Left colon (tissue), 2 donors: ENCODE measurements at regions of chr5 and their contacts with region 1.

Region 1: GRCh38 chr5:5409151-5409810 is 13.2 kb upstream of the ICE1 start:
- DNase-seq: peak in 1 of 2 donors; percentile 13
- ATAC-seq: no peak

Region 2: GRCh38 chr5:5128766-5129165 is 280.5 kb before region 1 on chr5:
- intact Hi-C with region 1: no loop called
- DNase-seq: no peak
- ATAC-seq: no peak

Region 3: DNA sequence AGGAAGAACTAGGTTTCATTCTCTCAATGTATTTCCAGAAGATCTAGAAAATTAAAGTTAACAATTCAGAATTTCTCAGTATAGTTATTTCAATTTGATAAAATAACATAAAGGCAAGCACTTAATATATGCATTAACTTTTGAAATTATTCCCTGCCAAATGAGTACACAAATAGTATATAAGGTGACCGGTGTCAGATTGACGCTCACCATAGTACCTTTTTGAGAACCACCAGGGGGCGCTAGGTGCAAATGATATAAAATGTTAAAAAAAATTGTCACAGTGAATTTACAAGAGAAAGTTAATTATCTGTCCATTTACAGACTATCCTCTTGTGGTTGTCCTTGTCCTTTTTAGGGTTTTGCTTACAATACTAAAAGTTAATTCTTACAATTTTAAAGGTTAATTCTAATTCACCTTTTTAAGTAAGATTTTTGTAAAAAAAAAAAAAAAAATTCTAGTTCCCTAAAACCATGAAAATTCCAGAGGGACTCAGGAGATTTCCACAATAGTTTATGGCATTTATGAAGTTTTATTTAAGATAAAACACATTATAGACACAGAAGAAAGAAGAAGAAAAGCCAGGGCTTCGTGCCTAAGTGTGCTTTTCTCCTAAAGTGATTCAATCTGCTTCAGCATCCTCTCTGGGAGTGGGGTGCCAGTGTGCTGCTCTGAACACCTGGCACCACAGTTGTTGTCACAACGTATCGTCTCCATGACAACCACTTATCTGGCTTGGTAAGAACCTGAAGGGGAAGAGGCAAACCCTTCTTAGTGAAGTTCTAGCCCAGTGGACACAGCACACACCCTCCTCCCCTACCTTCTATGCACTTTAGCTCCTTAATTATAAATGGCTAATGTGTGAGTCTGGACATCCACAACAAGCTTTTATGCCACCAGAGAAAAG is 267.4 kb before region 1 on chr5:
- intact Hi-C with region 1: loop called in 1 of 2 experiments (anchors 10 kb)
- DNase-seq: peak in 1 of 2 donors; percentile 53
- ATAC-seq: no peak

Region 4: GRCh38 chr5:5291357-5291756 is 117.9 kb before region 1 on chr5:
- intact Hi-C with region 1: no loop called
- DNase-seq: no peak
- ATAC-seq: no peak